ENCODE measurements at regions of chr4 and their contacts with region 1.

Region 1: GRCh38 chr4:37686373-37687193 is at the start of gene RELL1:
- DNase-seq: peak; percentile 99
- ATAC-seq: peak; percentile 97
- total RNA-seq, gene RELL1: 23.6 TPM

Region 2: DNA sequence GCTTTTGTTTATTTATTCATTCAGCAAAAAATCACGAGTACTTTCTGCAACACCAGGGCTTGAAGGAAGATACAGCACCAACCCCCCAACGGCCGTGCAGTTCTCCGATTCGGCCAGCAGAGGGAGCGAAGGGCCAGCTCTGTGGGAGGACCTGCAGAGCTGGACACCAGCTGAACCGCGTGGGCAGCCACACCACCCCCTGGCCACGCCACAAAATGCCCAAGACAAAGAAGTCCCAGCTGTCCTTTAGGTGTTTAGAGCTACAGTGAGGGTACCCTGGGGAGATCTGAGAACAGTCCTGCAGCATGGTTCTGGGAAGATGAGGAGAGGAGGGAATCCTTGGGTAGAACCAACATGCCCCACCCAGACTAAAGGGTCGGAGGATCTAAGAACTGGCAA is 83.5 kb before region 1 on chr4:
- intact Hi-C with region 1: loop called (anchors 2 kb)
- DNase-seq: peak; percentile 91
- ATAC-seq: peak; percentile 96

Region 3: DNA sequence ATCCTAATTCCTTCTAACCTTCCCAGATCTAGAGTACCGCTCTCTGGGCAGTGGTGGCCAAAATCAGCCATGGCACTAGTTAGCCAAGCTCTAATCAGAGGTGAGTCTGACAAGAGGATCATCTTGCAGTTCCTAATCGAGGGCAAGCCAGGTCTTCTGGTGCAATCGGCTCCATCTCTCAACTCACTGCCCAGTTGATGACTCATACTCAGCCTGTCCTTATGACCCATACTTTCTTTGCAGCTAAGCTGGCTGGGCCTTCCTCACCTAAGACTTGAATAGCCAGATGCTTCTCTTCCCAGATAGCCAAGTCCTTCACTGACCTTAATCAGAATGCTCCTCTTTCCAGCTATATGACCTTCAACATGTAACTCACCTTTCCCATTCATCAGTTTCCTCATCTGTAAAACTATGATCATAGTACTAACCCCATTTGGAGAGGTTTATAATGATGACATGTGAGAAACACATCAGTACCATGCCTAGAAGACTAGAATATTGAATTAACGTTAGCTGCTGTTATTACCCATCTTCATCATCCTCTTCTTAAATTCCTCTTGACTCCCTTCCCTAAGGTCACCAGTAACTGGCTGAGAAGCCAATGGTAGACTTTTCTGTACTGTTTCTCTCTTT is 57.5 kb before region 1 on chr4:
- intact Hi-C with region 1: loop called (anchors 5 kb)
- DNase-seq: no peak
- ATAC-seq: peak; percentile 38

Region 4: GRCh38 chr4:37648096-37648817 is 38.3 kb before region 1 on chr4:
- intact Hi-C with region 1: loop called (anchors 5 kb)
- DNase-seq: no peak
- ATAC-seq: peak; percentile 96

Region 5: DNA sequence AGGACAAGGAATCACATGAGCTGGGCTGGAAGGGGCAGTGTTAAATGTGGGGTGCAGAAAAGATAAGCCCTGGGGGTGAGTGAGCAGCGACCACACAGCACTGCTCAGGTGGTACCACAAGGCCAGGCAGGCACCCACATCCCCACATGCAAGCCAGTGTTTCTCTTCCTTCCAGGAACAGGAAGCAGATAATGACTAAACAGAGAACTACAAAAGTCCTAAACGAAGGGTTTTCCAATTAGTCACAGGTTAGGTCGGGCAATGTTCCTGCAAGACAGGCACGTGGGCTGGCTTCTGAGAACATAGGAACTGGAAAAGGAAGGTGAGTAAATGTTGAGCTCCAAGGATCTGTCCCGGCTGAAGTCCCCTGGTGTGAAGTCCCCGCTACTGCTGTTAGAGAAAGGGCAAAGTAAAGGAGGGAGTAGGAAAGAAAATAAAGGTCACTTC is 19.9 kb before region 1 on chr4:
- intact Hi-C with region 1: loop called (anchors 1 kb)
- DNase-seq: no peak
- ATAC-seq: no peak

Region 6: GRCh38 chr4:37793562-37793961 is 107.0 kb after region 1 on chr4:
- intact Hi-C with region 1: loop called (anchors 5 kb)
- DNase-seq: no peak
- ATAC-seq: peak; percentile 82

Region 7: DNA sequence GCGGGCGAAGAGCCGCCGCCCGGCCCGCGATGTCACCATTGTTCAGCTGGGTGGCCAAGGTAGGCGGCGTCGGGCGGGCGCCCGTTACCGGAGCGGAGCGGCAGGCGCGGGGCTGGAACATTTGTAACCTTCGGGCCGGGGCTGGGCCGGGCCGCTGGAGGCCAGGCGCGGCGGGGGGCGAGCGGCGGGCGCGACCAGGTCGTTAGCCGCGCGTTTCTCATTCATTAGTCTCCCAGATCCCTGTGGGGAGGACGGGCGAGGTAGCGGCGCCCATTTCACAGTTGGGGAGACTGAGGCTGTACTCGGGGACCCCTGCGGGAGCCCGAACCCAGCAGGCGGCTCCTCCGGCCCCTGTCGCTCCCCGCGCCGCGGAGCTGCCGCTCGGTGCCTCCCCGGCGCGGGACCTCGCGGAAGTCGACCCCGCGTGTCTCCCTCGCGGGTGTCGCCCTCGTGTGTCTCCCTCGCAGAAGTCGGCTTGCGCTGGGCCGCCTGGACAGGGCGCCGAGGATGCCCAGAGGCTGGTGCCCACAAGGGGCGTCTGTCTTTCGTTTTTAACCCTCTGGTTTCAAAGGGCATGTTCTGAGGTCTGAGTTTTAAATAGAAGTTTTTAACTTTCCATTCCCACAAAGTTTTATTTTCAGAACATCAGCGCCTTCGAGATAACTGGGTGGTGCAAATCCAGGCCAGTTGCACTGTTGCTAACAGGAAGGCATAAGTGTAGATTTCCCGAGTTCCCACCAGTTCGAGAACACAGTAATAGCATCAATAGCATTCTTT is 291.1 kb after region 1 on chr4:
- intact Hi-C with region 1: loop called (anchors 10 kb)
- DNase-seq: peak; percentile 93
- ATAC-seq: peak; percentile 87